Activated B cell treated with CpG ODN at 0.5 μM for 24 hours (primary cell): ENCODE measurements at regions of chr3 and their contacts with region 1.

Region 1: GRCh38 chr3:24420224-24420623 is 74.4 kb downstream of the THRB start:
- DNase-seq: no peak
- ATAC-seq: no peak
- H3K4me3 Mint-ChIP-seq: no peak overlapping the region
- H3K27ac Mint-ChIP-seq: no peak overlapping the region
- H3K4me1 Mint-ChIP-seq: no peaks in the 10 kb centered on the region
- H3K27me3 Mint-ChIP-seq: no peaks in the 10 kb centered on the region
- CTCF ChIP-seq: no peak

Region 2: DNA sequence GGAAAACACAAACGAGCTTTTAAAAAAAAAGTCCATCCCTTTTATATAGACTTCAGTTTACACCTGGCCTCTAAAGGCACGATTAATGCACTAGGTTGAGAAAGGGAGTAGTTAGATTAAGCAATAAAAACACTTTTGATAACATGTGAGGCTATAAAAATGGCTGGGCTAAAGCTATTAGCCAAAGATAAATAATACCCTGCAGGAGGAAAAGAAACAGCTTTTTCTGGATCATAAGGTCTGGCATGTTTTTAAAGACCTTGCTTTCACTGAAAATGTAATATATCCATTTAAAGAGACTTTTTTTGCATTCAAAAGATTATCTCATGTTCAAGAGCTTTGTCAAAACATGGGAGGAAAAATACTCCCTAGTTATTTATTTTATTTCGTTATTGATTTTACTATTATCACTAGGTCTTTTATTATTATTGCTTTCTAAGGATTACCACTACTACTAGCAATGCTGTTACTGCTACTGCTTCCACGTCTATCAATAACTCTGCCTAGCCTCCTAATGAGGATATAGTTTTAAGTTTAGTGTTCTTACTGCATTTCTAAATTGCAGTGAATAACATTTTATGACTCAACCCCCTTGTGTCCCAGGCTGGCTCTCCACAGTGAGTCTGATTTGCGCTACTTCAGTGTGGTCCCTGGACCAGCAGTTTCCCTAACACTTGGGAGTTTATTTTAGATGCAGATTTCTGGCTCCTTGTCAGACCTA is 19.0 kb before region 1 on chr3:
- CTCF ChIA-PET with region 1: no interaction called
- POLR2A ChIA-PET with region 1: no interaction called
- intact Hi-C with region 1: loop called (anchors 1 kb)
- DNase-seq: no peak
- ATAC-seq: no peak
- H3K4me3 Mint-ChIP-seq: no peak overlapping the region
- H3K27ac Mint-ChIP-seq: no peak overlapping the region
- H3K4me1 Mint-ChIP-seq: no peaks in the 10 kb centered on the region
- H3K27me3 Mint-ChIP-seq: no peaks in the 10 kb centered on the region
- CTCF ChIP-seq: no peak